AG04450 (cell line): ENCODE measurements at regions of chr2 and their contacts with region 1.

Region 1: DNA sequence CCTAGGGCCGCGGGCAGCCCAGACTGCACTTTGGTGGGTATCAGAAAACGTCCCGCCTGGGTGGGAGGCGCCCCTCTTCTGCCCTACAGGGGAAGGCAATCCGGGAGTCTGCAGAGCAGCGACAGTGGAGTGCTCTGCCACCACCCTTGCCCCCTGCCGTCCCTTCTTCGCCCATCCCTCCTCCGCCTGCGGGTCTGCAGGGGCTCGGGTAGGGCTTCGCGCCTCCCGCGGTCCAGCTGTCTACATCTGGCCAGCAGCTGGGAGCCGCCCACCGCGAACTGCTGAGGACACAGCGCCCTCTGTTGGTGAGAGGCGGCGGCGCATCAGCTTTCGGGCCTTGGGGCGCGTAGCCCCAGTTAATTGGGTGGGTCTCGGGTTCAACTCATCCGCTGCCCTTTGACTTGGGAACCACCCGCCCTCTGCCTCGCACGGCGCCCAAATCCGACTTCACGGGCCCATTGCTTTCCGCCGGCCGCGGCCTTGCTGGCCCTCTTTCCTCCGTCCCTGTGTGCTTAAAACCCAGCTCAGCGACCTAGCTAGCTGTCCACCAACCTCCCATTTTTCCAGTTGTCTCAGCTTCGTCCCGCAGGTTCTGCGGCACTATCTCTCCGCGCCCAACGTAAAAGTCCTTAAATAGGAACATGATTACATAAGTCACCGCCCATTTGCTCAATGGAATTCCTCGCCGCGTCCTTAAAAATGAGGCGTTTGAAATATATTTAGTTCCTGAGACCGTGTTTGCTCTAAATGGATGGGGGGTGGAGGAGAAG is 17.6 kb downstream of the WNT10A start:
- DNase-seq: no peak
- H3K4me3 ChIP-seq: no peak overlapping the region
- H3K27ac ChIP-seq: no peak overlapping the region
- H3K27me3 ChIP-seq: peaks cover 81% of the 10 kb centered on the region
- CTCF ChIP-seq: peak; percentile 85

Region 2: GRCh38 chr2:218569661-218570500 is 328.4 kb before region 1 on chr2:
- CTCF ChIA-PET with region 1: no interaction called
- POLR2A ChIA-PET with region 1: no interaction called
- DNase-seq: no peak
- H3K4me3 ChIP-seq: peak overlapping the region; percentile 74
- H3K27ac ChIP-seq: peak overlapping the region; percentile 95
- H3K27me3 ChIP-seq: no peaks in the 10 kb centered on the region
- CTCF ChIP-seq: no peak

Region 3: GRCh38 chr2:218876562-218877219 is 21.6 kb before region 1 on chr2:
- CTCF ChIA-PET with region 1: interaction called, 127 read pairs
- POLR2A ChIA-PET with region 1: no interaction called
- DNase-seq: no peak
- H3K4me3 ChIP-seq: no peak overlapping the region
- H3K27ac ChIP-seq: no peak overlapping the region
- H3K27me3 ChIP-seq: peaks cover 83% of the 10 kb centered on the region
- CTCF ChIP-seq: peak; percentile 97

Region 4: DNA sequence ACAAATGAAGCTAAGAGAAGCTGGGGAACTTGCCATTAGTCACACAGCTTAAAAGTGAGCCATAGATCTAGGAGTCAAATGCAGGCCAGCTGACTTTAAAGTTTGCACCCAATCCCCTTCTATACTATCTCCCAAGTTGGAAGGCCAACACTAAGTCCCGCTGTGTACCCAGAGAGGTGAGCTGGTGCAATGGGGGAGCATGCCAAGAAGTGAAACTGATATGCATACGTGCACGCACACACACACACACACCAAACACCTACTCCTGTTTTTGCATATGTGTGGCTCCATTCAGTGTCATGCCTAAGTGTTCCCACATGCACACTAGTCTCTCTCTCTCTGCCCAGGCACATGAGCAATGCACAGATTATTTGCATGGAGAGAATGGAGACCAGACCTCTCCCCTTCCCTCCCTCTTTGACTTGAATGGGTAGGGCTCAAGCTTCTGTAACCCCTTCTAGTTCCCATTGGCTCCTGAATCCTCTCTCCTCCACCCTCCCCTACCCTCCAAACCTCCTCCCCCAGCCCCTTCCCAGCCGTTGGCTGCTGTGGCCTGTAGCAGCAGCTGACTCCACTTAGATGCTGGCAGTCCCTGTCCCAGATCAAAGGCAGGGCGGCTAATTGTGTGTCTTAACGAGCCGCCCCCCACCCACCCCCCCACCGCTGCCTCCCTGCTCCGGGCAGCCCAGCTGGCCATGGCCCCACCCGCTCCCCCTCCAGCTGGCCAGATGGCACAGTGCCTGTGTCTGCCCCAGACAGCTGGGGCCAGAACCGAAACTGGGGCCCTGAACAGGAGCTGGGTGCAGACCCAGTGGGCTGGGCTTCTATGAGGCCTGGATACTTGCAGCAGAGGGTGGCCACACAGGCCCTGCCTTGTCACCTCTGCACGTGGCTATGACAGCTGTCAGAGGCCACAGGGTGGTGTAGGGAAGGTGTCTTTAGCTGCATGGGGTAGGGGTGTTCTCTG is 12.0 kb before region 1 on chr2:
- CTCF ChIA-PET with region 1: interaction called, 127 read pairs
- POLR2A ChIA-PET with region 1: no interaction called
- DNase-seq: no peak
- H3K4me3 ChIP-seq: no peak overlapping the region
- H3K27ac ChIP-seq: no peak overlapping the region
- H3K27me3 ChIP-seq: peaks cover 79% of the 10 kb centered on the region
- CTCF ChIP-seq: no peak

Region 5: GRCh38 chr2:218908721-218909619 is 10.7 kb after region 1 on chr2:
- CTCF ChIA-PET with region 1: interaction called, 28 read pairs
- POLR2A ChIA-PET with region 1: no interaction called
- DNase-seq: peak; percentile 39
- H3K4me3 ChIP-seq: peak overlapping the region; percentile 61
- H3K27ac ChIP-seq: no peak overlapping the region
- H3K27me3 ChIP-seq: peaks cover 38% of the 10 kb centered on the region
- CTCF ChIP-seq: no peak